Endothelial cell of umbilical vein (primary cell): ENCODE measurements at regions of chr18 and their contacts with region 1.

Region 1: GRCh38 chr18:59631583-59632181 is 65.5 kb downstream of the CCBE1 start:
- DNase-seq: peak; percentile 21
- H3K4me3 ChIP-seq: no peak overlapping the region
- H3K27ac ChIP-seq: no peak overlapping the region
- H3K4me1 ChIP-seq: no peaks in the 10 kb centered on the region
- H3K27me3 ChIP-seq: peaks cover 0 to under 1% of the 10 kb centered on the region in 2 experiments
- CTCF ChIP-seq: peak; percentile 30 to 38
- POLR2A ChIP-seq: no peak

Region 2: GRCh38 chr18:59516356-59517155 is 115.1 kb before region 1 on chr18:
- CTCF ChIA-PET with region 1: interaction called, 14 read pairs
- POLR2A ChIA-PET with region 1: no interaction called
- dilution Hi-C with region 1: no loop called
- intact Hi-C with region 1: no loop called
- DNase-seq: peak; percentile 91
- H3K4me3 ChIP-seq: no peak overlapping the region
- H3K27ac ChIP-seq: no peak overlapping the region
- H3K4me1 ChIP-seq: peaks cover 4% of the 10 kb centered on the region
- H3K27me3 ChIP-seq: no peaks in the 10 kb centered on the region
- CTCF ChIP-seq: no peak
- POLR2A ChIP-seq: no peak

Region 3: GRCh38 chr18:59617468-59617932 is 14.2 kb before region 1 on chr18:
- CTCF ChIA-PET with region 1: interaction called, 13 read pairs
- POLR2A ChIA-PET with region 1: no interaction called
- dilution Hi-C with region 1: no loop called
- intact Hi-C with region 1: no loop called
- DNase-seq: no peak
- H3K4me3 ChIP-seq: no peak overlapping the region
- H3K27ac ChIP-seq: no peak overlapping the region
- H3K4me1 ChIP-seq: no peaks in the 10 kb centered on the region
- H3K27me3 ChIP-seq: no peaks in the 10 kb centered on the region
- CTCF ChIP-seq: no peak
- POLR2A ChIP-seq: no peak

Region 4: DNA sequence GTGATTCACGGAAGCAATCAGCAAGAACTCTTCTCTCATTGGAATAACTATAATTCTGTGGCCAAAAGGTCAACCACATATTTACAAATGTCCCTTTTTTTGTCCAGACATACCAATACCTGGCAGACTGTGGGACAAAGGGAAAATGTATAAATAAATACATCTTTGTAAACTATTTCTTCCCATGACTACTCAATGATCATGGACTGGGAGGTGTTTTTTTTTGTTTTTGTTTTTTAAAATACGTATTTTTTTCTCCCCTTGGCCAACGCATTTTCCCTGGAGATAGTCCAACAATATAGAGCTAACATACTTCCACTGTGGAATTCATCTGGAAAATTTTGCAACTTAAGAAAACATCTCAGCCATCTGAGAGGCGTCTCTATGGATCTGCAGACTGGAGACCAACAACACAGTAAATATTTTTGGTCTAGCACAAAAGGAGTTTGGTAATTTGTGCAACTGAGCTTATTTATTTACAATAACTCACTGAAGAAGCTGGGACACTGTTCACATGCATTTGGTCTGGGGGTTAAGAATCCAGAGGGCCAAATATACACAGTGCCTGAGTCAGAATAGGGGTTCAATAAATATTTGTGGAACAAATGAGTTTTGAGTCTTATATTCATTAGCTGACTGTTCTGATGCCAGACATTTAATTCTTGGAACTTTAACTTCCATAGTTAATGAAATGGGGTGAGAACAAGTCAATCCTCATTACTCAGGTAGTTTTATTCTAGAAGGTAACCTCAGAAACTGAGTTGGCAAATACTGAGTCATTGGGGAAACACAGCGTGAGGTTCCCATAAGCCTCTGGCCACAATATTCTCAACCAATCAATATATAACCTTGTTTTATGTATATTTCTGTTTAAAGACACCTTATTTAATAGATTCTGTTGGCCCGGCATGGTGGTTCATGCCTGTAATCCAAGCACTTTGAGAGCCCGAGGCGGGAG is 29.4 kb after region 1 on chr18:
- CTCF ChIA-PET with region 1: interaction called, 16 read pairs
- POLR2A ChIA-PET with region 1: no interaction called
- dilution Hi-C with region 1: no loop called
- intact Hi-C with region 1: no loop called
- DNase-seq: no peak
- H3K4me3 ChIP-seq: no peak overlapping the region
- H3K27ac ChIP-seq: no peak overlapping the region
- H3K4me1 ChIP-seq: no peaks in the 10 kb centered on the region
- H3K27me3 ChIP-seq: no peaks in the 10 kb centered on the region
- CTCF ChIP-seq: no peak
- POLR2A ChIP-seq: no peak

Region 5: DNA sequence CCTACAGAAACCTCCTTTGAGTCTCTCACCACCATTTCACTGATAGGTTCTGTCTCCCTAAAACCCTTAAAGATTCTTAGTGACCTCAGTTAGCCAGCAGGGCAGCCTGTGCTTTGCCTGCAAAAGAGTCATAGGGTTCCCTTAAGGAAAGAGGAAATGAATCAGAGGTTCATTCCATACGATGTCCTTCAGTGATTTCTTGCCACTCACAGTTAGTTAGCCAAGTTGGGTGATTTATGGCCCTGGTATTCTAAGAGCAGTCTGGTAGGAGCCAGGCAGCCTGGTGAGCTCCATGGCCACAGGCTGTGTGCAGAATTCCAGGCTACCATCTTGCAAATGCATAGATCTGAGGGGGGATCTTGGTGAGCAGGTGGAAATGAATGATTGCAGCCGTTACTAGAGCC is 84.3 kb after region 1 on chr18:
- CTCF ChIA-PET with region 1: interaction called, 14 read pairs
- POLR2A ChIA-PET with region 1: no interaction called
- dilution Hi-C with region 1: no loop called
- intact Hi-C with region 1: no loop called
- DNase-seq: peak; percentile 77
- H3K4me3 ChIP-seq: no peak overlapping the region
- H3K27ac ChIP-seq: no peak overlapping the region
- H3K4me1 ChIP-seq: no peaks in the 10 kb centered on the region
- H3K27me3 ChIP-seq: no peaks in the 10 kb centered on the region
- CTCF ChIP-seq: no peak
- POLR2A ChIP-seq: no peak

Region 6: GRCh38 chr18:59733421-59733820 is 101.7 kb after region 1 on chr18:
- CTCF ChIA-PET with region 1: no interaction called
- POLR2A ChIA-PET with region 1: no interaction called
- dilution Hi-C with region 1: no loop called
- intact Hi-C with region 1: no loop called
- DNase-seq: no peak
- H3K4me3 ChIP-seq: no peak overlapping the region
- H3K27ac ChIP-seq: no peak overlapping the region
- H3K4me1 ChIP-seq: no peaks in the 10 kb centered on the region
- H3K27me3 ChIP-seq: no peaks in the 10 kb centered on the region
- CTCF ChIP-seq: no peak
- POLR2A ChIP-seq: no peak

Region 7: DNA sequence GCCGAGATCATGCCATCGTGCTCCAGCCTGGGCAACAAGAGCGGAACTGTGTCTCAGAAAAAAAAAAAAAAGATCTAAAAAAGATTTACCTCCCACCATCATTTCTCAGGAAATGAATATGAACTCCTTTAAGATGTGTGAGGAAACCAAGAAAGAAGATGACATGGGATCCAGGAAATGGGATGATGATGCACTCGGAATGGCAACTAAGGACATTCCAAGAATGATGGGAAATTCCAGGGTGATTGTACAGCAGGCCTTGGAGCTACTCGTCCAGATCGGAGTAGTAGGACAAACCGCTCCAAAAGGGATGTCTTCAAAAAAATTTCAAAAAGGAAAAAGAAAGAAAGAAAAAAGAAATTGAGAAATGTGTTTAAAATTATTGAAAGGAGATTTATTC is 183.2 kb after region 1 on chr18:
- CTCF ChIA-PET with region 1: interaction called, 19 read pairs
- POLR2A ChIA-PET with region 1: no interaction called
- dilution Hi-C with region 1: no loop called
- intact Hi-C with region 1: no loop called
- DNase-seq: no peak
- H3K4me3 ChIP-seq: no peak overlapping the region
- H3K27ac ChIP-seq: no peak overlapping the region
- H3K4me1 ChIP-seq: no peaks in the 10 kb centered on the region
- H3K27me3 ChIP-seq: no peaks in the 10 kb centered on the region
- CTCF ChIP-seq: no peak
- POLR2A ChIP-seq: no peak

Region 8: GRCh38 chr18:60549338-60549960 is 917.8 kb after region 1 on chr18:
- CTCF ChIA-PET with region 1: interaction called, 14 read pairs
- POLR2A ChIA-PET with region 1: no interaction called
- dilution Hi-C with region 1: no loop called
- intact Hi-C with region 1: no loop called
- DNase-seq: peak; percentile 64
- H3K4me3 ChIP-seq: no peak overlapping the region
- H3K27ac ChIP-seq: no peak overlapping the region
- H3K4me1 ChIP-seq: no peaks in the 10 kb centered on the region
- H3K27me3 ChIP-seq: no peaks in the 10 kb centered on the region
- CTCF ChIP-seq: peak; percentile 53 to 57
- POLR2A ChIP-seq: no peak

Region 9: GRCh38 chr18:61274561-61274960 is 1642.9 kb after region 1 on chr18:
- CTCF ChIA-PET with region 1: no interaction called
- POLR2A ChIA-PET with region 1: no interaction called
- dilution Hi-C with region 1: no loop called
- intact Hi-C with region 1: no loop called
- DNase-seq: no peak
- H3K4me3 ChIP-seq: no peak overlapping the region
- H3K27ac ChIP-seq: no peak overlapping the region
- H3K4me1 ChIP-seq: no peaks in the 10 kb centered on the region
- H3K27me3 ChIP-seq: no peaks in the 10 kb centered on the region
- CTCF ChIP-seq: no peak
- POLR2A ChIP-seq: no peak